Gastrocnemius medialis (tissue), 4 donors: ENCODE measurements at regions of chr12 and their contacts with region 1.

Region 1: GRCh38 chr12:96219698-96220206 is 25.6 kb downstream of the ELK3 start:
- DNase-seq: no peak
- ATAC-seq: no peak
- H3K4me3 ChIP-seq: no peak overlapping the region
- H3K27ac ChIP-seq: no peak overlapping the region
- H3K4me1 ChIP-seq: peaks cover 11 to 14% of the 10 kb centered on the region in 2 donors
- H3K27me3 ChIP-seq: no peaks in the 10 kb centered on the region
- CTCF ChIP-seq: no peak
- POLR2A ChIP-seq: no peak

Region 2: DNA sequence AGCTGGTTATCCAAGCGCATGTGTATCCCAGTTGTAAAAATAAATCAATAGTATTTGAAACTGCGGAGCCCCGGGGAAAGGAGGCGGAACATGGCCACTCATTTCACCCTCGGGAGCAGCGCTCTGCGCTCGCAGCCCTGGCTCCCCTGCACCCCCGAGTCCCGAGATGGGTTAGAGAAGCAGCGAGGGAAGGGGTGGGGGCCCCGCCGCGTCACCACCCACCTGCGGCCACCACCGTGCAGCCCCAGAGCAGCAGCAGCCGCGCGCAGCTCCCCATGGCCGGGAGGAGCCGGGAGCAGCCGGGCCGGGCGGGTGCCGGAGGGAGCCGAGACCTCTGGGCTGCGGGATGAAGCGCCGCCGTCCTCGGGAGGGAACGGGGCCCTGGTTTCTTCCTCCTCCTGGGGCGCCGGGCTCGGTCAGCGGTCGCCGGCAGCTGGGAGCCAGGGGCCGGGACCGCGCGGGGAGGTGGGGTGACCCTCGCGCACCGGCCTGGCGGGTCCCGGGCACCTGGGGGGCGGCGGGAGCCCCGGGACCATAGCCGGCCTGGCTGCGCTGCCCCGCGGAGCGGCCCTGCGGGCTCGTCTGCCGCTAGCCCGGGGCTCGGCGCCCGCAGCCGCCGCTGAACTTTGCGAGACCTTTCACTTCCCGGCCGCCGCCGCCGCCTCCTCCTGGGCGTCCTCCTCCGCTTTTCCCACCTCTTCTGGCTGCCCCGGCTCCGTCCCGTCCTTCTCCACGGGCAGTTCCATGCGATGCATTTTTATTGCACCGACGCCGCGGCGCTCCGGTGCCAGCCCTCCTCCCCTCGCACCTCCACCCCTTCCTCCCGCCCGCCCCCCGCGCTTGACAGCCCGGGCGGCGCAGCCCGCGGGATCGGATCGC is 429.5 kb before region 1 on chr12 and contains the start of gene NTN4:
- in situ Hi-C with region 1: no loop called
- intact Hi-C with region 1: no loop called
- DNase-seq: no peak
- ATAC-seq: peak; percentile 33 to 42
- H3K4me3 ChIP-seq: peak within 1 kb of the TSS; percentile 65 to 75 (median 67)
- H3K27ac ChIP-seq: peak within 1 kb of the TSS; percentile 71 to 76 (median 74)
- H3K4me1 ChIP-seq: peaks cover 4 to 14% of the 10 kb centered on the region in 2 donors
- H3K27me3 ChIP-seq: peaks cover 0 to 27% (median 8%) of the 10 kb centered on the region in 3 donors
- CTCF ChIP-seq: no peak
- POLR2A ChIP-seq: peak in 1 of 2 donors; percentile 20
- total RNA-seq, gene NTN4: 4.0 to 10.0 (median 5.7) TPM

Region 3: DNA sequence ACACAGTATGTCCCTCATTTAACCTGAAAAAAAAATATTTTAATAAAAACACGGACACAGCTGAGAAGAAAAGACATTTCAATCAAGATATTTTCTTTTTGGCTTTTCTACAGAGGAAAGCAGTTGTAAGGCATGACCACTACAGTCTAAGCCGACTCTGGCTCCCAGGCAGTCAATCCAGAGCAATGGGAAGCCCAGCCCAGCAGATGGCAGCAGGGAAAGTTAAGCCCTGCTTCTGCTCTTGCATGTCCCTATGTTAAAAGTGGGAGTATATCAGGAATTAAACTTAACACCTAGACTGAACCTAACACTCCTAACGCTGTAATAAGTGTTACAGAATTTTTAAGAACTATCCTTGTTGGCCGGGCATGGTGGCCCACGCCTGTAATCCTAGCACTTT is 204.1 kb before region 1 on chr12:
- in situ Hi-C with region 1: no loop called
- intact Hi-C with region 1: loop called (anchors 2 kb)
- DNase-seq: peak in 1 of 2 donors; percentile 30
- ATAC-seq: peak in 1 of 2 donors; percentile 68
- H3K4me3 ChIP-seq: no peak overlapping the region
- H3K27ac ChIP-seq: peak overlapping the region; percentile 42 to 70 (median 63)
- H3K4me1 ChIP-seq: peaks cover 13 to 18% of the 10 kb centered on the region in 2 donors
- H3K27me3 ChIP-seq: no peaks in the 10 kb centered on the region
- CTCF ChIP-seq: peak in 2 of 5 experiments; percentile 29 to 30
- POLR2A ChIP-seq: no peak

Region 4: DNA sequence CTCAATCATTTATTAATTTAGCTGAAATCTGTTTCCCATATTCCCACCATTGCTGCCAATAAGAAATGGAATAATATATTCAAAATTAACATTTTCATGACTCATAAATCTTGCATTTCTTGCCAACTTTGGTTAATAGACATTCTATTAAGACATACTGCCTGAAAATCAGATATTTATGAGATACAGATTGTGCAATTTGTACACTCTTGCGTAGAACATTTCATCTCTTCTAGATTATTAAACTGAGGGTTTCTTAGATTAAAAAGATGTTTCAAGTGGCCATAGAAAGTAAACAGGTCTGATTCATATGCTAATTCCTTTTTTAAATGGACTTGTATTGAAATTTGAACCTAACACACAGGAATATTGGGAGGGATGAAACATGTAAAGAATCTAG is 193.4 kb before region 1 on chr12:
- in situ Hi-C with region 1: no loop called
- intact Hi-C with region 1: no loop called
- DNase-seq: no peak
- ATAC-seq: no peak
- H3K4me3 ChIP-seq: no peak overlapping the region
- H3K27ac ChIP-seq: no peak overlapping the region
- H3K4me1 ChIP-seq: no peaks in the 10 kb centered on the region
- H3K27me3 ChIP-seq: no peaks in the 10 kb centered on the region
- CTCF ChIP-seq: no peak
- POLR2A ChIP-seq: no peak

Region 5: DNA sequence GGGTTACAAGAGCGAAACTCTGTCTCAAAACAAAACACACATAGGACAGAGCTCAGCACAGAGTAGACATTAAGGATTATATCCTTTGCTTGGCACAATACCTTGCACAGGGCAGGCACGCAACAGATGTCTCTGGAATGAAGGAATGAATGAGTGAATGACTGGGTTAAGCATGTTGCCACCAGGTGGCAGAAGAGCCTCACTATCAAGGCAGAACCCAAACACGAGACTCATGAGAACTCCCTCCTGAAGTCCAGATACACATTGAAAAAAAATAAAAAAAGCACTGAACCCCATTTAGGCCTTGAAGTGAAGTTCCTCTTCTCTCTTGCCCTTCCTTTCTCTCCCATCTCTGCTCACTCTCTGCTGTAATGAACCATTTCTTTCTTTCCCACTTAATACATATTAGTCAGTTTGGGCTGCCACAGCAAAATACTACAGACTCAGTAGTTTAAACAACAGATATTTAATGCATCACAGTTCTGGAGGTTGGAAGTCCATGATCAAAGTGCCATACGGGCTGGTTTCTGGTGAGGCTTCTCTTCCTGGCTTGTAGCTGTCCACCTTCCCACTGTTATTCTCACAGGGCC is 157.8 kb before region 1 on chr12:
- in situ Hi-C with region 1: loop called in 3 of 4 experiments (anchors 5 to 10 kb)
- intact Hi-C with region 1: loop called (anchors 1 kb)
- DNase-seq: peak; percentile 32 to 42
- ATAC-seq: peak; percentile 52 to 62
- H3K4me3 ChIP-seq: no peak overlapping the region
- H3K27ac ChIP-seq: no peak overlapping the region
- H3K4me1 ChIP-seq: no peaks in the 10 kb centered on the region
- H3K27me3 ChIP-seq: no peaks in the 10 kb centered on the region
- CTCF ChIP-seq: peak; percentile 45 to 75 (median 72)
- POLR2A ChIP-seq: no peak

Region 6: GRCh38 chr12:96237465-96238077 is 17.8 kb after region 1 on chr12:
- in situ Hi-C with region 1: no loop called
- intact Hi-C with region 1: loop called (anchors 2 kb)
- DNase-seq: peak; percentile 36 to 54
- ATAC-seq: peak; percentile 47 to 65
- H3K4me3 ChIP-seq: peak overlapping the region in 1 of 4 donors; percentile 6
- H3K27ac ChIP-seq: peak overlapping the region; percentile 43 to 69 (median 64)
- H3K4me1 ChIP-seq: peaks cover 42 to 62% of the 10 kb centered on the region in 2 donors
- H3K27me3 ChIP-seq: peaks cover 9 to 15% (median 13%) of the 10 kb centered on the region in 3 donors
- CTCF ChIP-seq: no peak
- POLR2A ChIP-seq: no peak

Region 7: DNA sequence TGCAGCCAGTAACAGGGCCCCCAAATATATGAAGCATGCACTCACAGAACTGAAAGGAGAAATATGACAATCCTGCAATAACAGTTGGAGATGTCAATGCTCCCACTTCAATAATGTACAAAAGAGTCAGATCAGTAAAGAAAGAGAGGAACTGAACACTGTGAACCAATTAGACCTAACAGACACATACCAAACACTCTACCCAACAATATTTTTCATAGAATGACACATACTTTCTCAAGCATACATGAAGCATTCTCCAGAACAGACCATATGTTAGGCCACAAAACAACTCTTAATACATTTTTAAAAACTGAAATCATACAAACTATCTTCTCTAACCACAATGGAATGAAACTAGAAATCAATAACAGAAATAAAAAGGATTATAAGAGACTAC is 54.6 kb after region 1 on chr12:
- in situ Hi-C with region 1: no loop called
- intact Hi-C with region 1: no loop called
- DNase-seq: no peak
- ATAC-seq: no peak
- H3K4me3 ChIP-seq: no peak overlapping the region
- H3K27ac ChIP-seq: no peak overlapping the region
- H3K4me1 ChIP-seq: no peaks in the 10 kb centered on the region
- H3K27me3 ChIP-seq: no peaks in the 10 kb centered on the region
- CTCF ChIP-seq: no peak
- POLR2A ChIP-seq: no peak

Region 8: GRCh38 chr12:96516472-96517430 is 297.0 kb after region 1 on chr12:
- in situ Hi-C with region 1: loop called in 3 of 4 experiments (anchors 10 to 25 kb)
- intact Hi-C with region 1: loop called (anchors 10 kb)
- DNase-seq: peak; percentile 32 to 44
- ATAC-seq: no peak
- H3K4me3 ChIP-seq: no peak overlapping the region
- H3K27ac ChIP-seq: no peak overlapping the region
- H3K4me1 ChIP-seq: no peaks in the 10 kb centered on the region
- H3K27me3 ChIP-seq: no peaks in the 10 kb centered on the region
- CTCF ChIP-seq: peak; percentile 37 to 56 (median 53)
- POLR2A ChIP-seq: no peak

Region 9: GRCh38 chr12:96698521-96698920 is 478.8 kb after region 1 on chr12:
- in situ Hi-C with region 1: no loop called
- intact Hi-C with region 1: no loop called
- DNase-seq: no peak
- ATAC-seq: no peak
- H3K4me3 ChIP-seq: no peak overlapping the region
- H3K27ac ChIP-seq: no peak overlapping the region
- H3K4me1 ChIP-seq: no peaks in the 10 kb centered on the region
- H3K27me3 ChIP-seq: no peaks in the 10 kb centered on the region
- CTCF ChIP-seq: no peak
- POLR2A ChIP-seq: no peak